ENCODE measurements at regions of chr3 and their contacts with region 1.

Region 1: GRCh38 chr3:177050501-177051237 is 146.6 kb downstream of the TBL1XR1 start:
- DNase-seq: no peak
- ATAC-seq: peak; percentile 83

Region 2: GRCh38 chr3:177084616-177085015 is 33.9 kb after region 1 on chr3:
- intact Hi-C with region 1: no loop called
- DNase-seq: no peak
- ATAC-seq: no peak

Region 3: DNA sequence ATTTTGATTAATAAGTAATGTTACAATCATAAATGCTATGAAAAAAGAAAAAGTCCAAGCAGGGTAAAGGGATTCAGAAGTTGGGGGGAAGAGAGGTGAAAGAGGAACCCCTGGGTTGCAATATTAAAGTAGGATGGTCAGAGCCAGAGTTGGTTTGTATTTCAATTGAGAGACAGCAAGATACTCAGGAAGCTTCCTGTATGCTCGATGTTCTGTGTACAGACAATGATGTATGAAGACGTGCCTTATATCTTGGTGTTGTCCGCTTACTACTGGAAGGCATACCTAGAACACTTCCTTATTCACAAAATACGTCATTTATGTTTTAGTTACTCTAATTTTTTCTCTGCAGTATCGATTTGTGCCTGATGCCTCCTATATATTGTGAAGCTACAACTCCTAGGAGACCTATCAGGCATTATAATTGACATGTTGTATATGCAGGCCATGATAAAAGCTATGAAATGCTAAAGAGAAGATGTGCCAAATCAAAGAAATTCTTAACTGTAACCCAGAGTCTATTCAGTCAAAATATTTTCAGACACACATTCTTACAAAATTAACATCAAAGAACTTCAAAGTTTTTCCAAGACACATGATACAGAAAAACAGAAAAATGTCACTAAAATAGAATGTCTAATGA is 59.1 kb after region 1 on chr3:
- intact Hi-C with region 1: no loop called
- DNase-seq: no peak
- ATAC-seq: no peak

Region 4: GRCh38 chr3:177190756-177191681 is 140.3 kb after region 1 on chr3:
- intact Hi-C with region 1: loop called (anchors 5 kb)
- DNase-seq: no peak
- ATAC-seq: no peak

Measured in sciatic nerve (tissue), 2 donors.